ENCODE measurements at regions of chr11 and their contacts with region 1.

Region 1: GRCh38 chr11:127733552-127733951 is 733.0 kb upstream of the KIRREL3 start:
- DNase-seq: peak; percentile 7 to 54
- ATAC-seq: peak; percentile 72 to 96 (median 90)
- H3K4me3 ChIP-seq: no peak overlapping the region
- H3K27ac ChIP-seq: peak overlapping the region in 4 of 10 donors; percentile 13 to 64 (median 38)
- H3K4me1 ChIP-seq: peaks cover 0 to 12% (median 0%) of the 10 kb centered on the region in 9 donors
- H3K27me3 ChIP-seq: no peaks in the 10 kb centered on the region
- CTCF ChIP-seq: no peak

Region 2: GRCh38 chr11:127640561-127641451 is 92.7 kb before region 1 on chr11:
- intact Hi-C with region 1: no loop called
- DNase-seq: no peak
- ATAC-seq: no peak
- H3K4me3 ChIP-seq: no peak overlapping the region
- H3K27ac ChIP-seq: no peak overlapping the region
- H3K4me1 ChIP-seq: no peaks in the 10 kb centered on the region
- H3K27me3 ChIP-seq: no peaks in the 10 kb centered on the region
- CTCF ChIP-seq: no peak

Region 3: DNA sequence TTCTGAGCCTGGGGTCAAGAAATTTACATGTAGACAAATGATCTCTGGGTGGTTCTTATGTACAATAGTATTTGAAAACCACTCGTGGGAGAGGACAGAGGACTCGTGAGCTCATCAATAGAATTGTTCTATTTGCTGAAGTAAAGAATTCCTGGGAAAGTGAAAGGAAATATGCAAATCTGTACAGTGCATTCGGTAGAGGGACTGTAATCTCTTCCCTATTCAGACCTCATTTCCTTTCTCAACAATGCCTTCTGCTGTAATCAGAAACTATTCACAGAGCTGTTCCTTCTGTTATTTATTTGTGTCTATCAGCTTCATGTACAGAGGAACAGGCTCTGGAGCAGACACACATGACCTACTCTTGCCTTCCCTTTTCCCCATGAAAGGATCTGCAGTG is 23.6 kb before region 1 on chr11:
- intact Hi-C with region 1: no loop called
- DNase-seq: no peak
- ATAC-seq: peak in 2 of 8 donors; percentile 26 to 46
- H3K4me3 ChIP-seq: no peak overlapping the region
- H3K27ac ChIP-seq: no peak overlapping the region
- H3K4me1 ChIP-seq: no peaks in the 10 kb centered on the region
- H3K27me3 ChIP-seq: no peaks in the 10 kb centered on the region
- CTCF ChIP-seq: no peak

Region 4: GRCh38 chr11:127766734-127767133 is 33.2 kb after region 1 on chr11:
- intact Hi-C with region 1: loop called in 1 of 10 experiments (anchors 5 kb)
- DNase-seq: no peak
- ATAC-seq: peak in 1 of 8 donors; percentile 21
- H3K4me3 ChIP-seq: no peak overlapping the region
- H3K27ac ChIP-seq: peak overlapping the region in 4 of 10 donors; percentile 14 to 58 (median 30)
- H3K4me1 ChIP-seq: peaks cover 0 to 13% (median 0%) of the 10 kb centered on the region in 9 donors
- H3K27me3 ChIP-seq: no peaks in the 10 kb centered on the region
- CTCF ChIP-seq: no peak

Region 5: GRCh38 chr11:127816962-127817361 is 83.4 kb after region 1 on chr11:
- intact Hi-C with region 1: no loop called
- DNase-seq: no peak
- ATAC-seq: no peak
- H3K4me3 ChIP-seq: no peak overlapping the region
- H3K27ac ChIP-seq: no peak overlapping the region
- H3K4me1 ChIP-seq: no peaks in the 10 kb centered on the region
- H3K27me3 ChIP-seq: no peaks in the 10 kb centered on the region
- CTCF ChIP-seq: no peak

Region 6: GRCh38 chr11:128125723-128126122 is 392.2 kb after region 1 on chr11:
- intact Hi-C with region 1: no loop called
- DNase-seq: no peak
- ATAC-seq: no peak
- H3K4me3 ChIP-seq: no peak overlapping the region
- H3K27ac ChIP-seq: no peak overlapping the region
- H3K4me1 ChIP-seq: no peaks in the 10 kb centered on the region
- H3K27me3 ChIP-seq: no peaks in the 10 kb centered on the region
- CTCF ChIP-seq: no peak

Measured in heart right ventricle (tissue), 16 donors.